ENCODE measurements at regions of chr18 and their contacts with region 1.

Region 1: GRCh38 chr18:32552421-32553030 is 81.8 kb upstream of the GAREM1 start:
- DNase-seq: peak; percentile 23 to 50 (median 25)
- H3K4me3 ChIP-seq: no peak overlapping the region
- H3K4me3 Mint-ChIP-seq: no peak overlapping the region
- H3K27ac ChIP-seq: no peak overlapping the region
- H3K27ac Mint-ChIP-seq: no peak overlapping the region
- H3K4me1 ChIP-seq: no peaks in the 10 kb centered on the region
- H3K4me1 Mint-ChIP-seq: no peaks in the 10 kb centered on the region
- H3K27me3 ChIP-seq: no peaks in the 10 kb centered on the region
- H3K27me3 Mint-ChIP-seq: peaks cover 5 to 7% (median 6%) of the 10 kb centered on the region in 3 donors
- CTCF ChIP-seq: peak; percentile 87

Region 2: GRCh38 chr18:32160547-32160946 is 392.0 kb before region 1 on chr18:
- intact Hi-C with region 1: loop called (anchors 2 to 5 kb)
- DNase-seq: no peak
- H3K4me3 ChIP-seq: no peak overlapping the region
- H3K4me3 Mint-ChIP-seq: no peak overlapping the region
- H3K27ac ChIP-seq: no peak overlapping the region
- H3K27ac Mint-ChIP-seq: peak overlapping the region in 1 of 7 donors; percentile 64
- H3K4me1 ChIP-seq: peaks cover 20 to 23% of the 10 kb centered on the region in 2 donors
- H3K4me1 Mint-ChIP-seq: peaks cover 25% of the 10 kb centered on the region
- H3K27me3 ChIP-seq: peaks cover 0 to 3% of the 10 kb centered on the region in 2 donors
- H3K27me3 Mint-ChIP-seq: peaks cover 10 to 11% (median 10%) of the 10 kb centered on the region in 3 donors
- CTCF ChIP-seq: no peak

Region 3: GRCh38 chr18:32243358-32243757 is 309.2 kb before region 1 on chr18:
- intact Hi-C with region 1: no loop called
- DNase-seq: no peak
- H3K4me3 ChIP-seq: no peak overlapping the region
- H3K4me3 Mint-ChIP-seq: no peak overlapping the region
- H3K27ac ChIP-seq: no peak overlapping the region
- H3K27ac Mint-ChIP-seq: no peak overlapping the region
- H3K4me1 ChIP-seq: no peaks in the 10 kb centered on the region
- H3K4me1 Mint-ChIP-seq: no peaks in the 10 kb centered on the region
- H3K27me3 ChIP-seq: no peaks in the 10 kb centered on the region
- H3K27me3 Mint-ChIP-seq: peaks cover 0 to 3% (median 3%) of the 10 kb centered on the region in 3 donors
- CTCF ChIP-seq: no peak

Region 4: DNA sequence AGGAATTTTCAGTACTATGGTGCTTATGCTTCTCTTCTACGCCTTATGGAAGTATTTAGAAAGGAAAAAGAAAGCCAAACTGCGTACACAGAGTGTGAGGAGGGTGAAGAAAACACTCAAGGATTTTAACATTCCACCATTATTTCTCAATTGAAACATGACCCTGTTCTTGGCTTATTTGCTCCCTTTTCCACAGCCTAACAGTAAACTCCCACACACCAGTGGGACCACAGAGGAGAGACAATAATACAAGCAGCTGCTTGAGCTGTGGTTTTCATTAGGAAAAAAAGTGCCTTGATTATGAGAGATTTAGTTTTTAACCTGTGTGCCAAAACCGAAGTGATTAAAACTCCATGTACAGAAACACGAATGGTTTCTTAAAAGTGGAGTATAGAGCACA is 228.3 kb before region 1 on chr18:
- intact Hi-C with region 1: no loop called
- DNase-seq: no peak
- H3K4me3 ChIP-seq: no peak overlapping the region
- H3K4me3 Mint-ChIP-seq: no peak overlapping the region
- H3K27ac ChIP-seq: no peak overlapping the region
- H3K27ac Mint-ChIP-seq: no peak overlapping the region
- H3K4me1 ChIP-seq: no peaks in the 10 kb centered on the region
- H3K4me1 Mint-ChIP-seq: no peaks in the 10 kb centered on the region
- H3K27me3 ChIP-seq: no peaks in the 10 kb centered on the region
- H3K27me3 Mint-ChIP-seq: peaks cover 2 to 5% (median 3%) of the 10 kb centered on the region in 3 donors
- CTCF ChIP-seq: no peak

Region 5: GRCh38 chr18:32707147-32707546 is 154.6 kb after region 1 on chr18:
- intact Hi-C with region 1: no loop called
- DNase-seq: no peak
- H3K4me3 ChIP-seq: no peak overlapping the region
- H3K4me3 Mint-ChIP-seq: no peak overlapping the region
- H3K27ac ChIP-seq: no peak overlapping the region
- H3K27ac Mint-ChIP-seq: no peak overlapping the region
- H3K4me1 ChIP-seq: no peaks in the 10 kb centered on the region
- H3K4me1 Mint-ChIP-seq: no peaks in the 10 kb centered on the region
- H3K27me3 ChIP-seq: no peaks in the 10 kb centered on the region
- H3K27me3 Mint-ChIP-seq: peaks cover 0 to 7% (median 2%) of the 10 kb centered on the region in 3 donors
- CTCF ChIP-seq: no peak